ENCODE measurements at regions of chr2 and their contacts with region 1.

Region 1: GRCh38 chr2:130342533-130343275 is at the start of gene IMP4:
- DNase-seq: peak; percentile 99
- H3K4me3 Mint-ChIP-seq: peak within 1 kb of the TSS; percentile 100
- H3K27ac Mint-ChIP-seq: peak within 1 kb of the TSS; percentile 100
- H3K4me1 Mint-ChIP-seq: peaks cover 41% of the 10 kb centered on the region
- H3K27me3 Mint-ChIP-seq: no peaks in the 10 kb centered on the region
- total RNA-seq, gene IMP4: 71.1 to 75.2 TPM

Region 2: DNA sequence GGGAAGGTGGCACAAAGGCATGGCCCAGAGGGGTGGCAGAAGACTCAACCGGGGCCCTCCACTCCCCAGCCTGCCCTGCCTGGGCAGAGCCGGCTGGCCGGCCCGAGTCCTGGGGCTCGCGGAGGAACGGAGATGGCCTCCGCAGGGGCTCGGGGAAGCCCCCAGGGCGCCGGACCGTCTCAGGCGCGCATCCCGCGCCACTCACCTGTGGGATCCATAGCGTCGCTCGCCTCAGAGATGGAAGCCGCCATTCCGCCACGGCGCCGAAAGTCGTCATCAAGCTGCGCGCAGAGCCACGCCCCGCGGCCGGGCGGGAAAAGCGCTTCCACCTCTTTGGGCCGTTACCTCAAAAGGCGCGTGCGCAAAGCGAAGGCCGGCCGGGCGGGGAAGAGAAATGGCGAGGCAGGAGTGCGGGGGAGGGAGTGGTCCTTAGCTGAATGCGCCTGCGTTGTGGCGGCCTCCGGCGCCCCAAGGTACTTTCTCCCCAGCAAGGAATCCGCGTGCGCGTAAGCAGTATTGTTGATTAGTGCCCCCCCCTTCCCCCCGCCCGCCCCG is 161.3 kb before region 1 on chr2 and contains the start of gene SMPD4:
- CTCF ChIA-PET with region 1: interaction called, 10 read pairs
- POLR2A ChIA-PET with region 1: no interaction called
- DNase-seq: peak; percentile 96
- H3K4me3 Mint-ChIP-seq: peak within 1 kb of the TSS; percentile 91
- H3K27ac Mint-ChIP-seq: peak within 1 kb of the TSS; percentile 99
- H3K4me1 Mint-ChIP-seq: peaks cover 28% of the 10 kb centered on the region
- H3K27me3 Mint-ChIP-seq: no peaks in the 10 kb centered on the region
- total RNA-seq, gene SMPD4: 70.9 to 71.3 TPM

Region 3: GRCh38 chr2:130332271-130333073 is 10.2 kb before region 1 on chr2:
- CTCF ChIA-PET with region 1: interaction called, 16 read pairs
- POLR2A ChIA-PET with region 1: no interaction called
- DNase-seq: peak; percentile 70
- H3K4me3 Mint-ChIP-seq: peak overlapping the region; percentile 48
- H3K27ac Mint-ChIP-seq: no peak overlapping the region
- H3K4me1 Mint-ChIP-seq: peaks cover 14% of the 10 kb centered on the region
- H3K27me3 Mint-ChIP-seq: peaks cover 29% of the 10 kb centered on the region

Region 4: GRCh38 chr2:130355578-130356431 is 13.1 kb after region 1 on chr2 and contains the start of gene PTPN18:
- CTCF ChIA-PET with region 1: interaction called, 32 read pairs
- POLR2A ChIA-PET with region 1: interaction called, 11 read pairs
- DNase-seq: peak; percentile 60
- H3K4me3 Mint-ChIP-seq: peak within 1 kb of the TSS; percentile 73
- H3K27ac Mint-ChIP-seq: peak within 1 kb of the TSS; percentile 72
- H3K4me1 Mint-ChIP-seq: peaks cover 19% of the 10 kb centered on the region
- H3K27me3 Mint-ChIP-seq: peaks cover 8% of the 10 kb centered on the region
- total RNA-seq, gene PTPN18: 88.2 to 89.2 TPM

Region 5: GRCh38 chr2:130372055-130372832 is 29.5 kb after region 1 on chr2:
- CTCF ChIA-PET with region 1: interaction called, 20 read pairs
- POLR2A ChIA-PET with region 1: interaction called, 10 read pairs
- DNase-seq: peak; percentile 80
- H3K4me3 Mint-ChIP-seq: peak overlapping the region; percentile 86
- H3K27ac Mint-ChIP-seq: peak overlapping the region; percentile 95
- H3K4me1 Mint-ChIP-seq: peaks cover 67% of the 10 kb centered on the region
- H3K27me3 Mint-ChIP-seq: no peaks in the 10 kb centered on the region

Measured in activated CD4-positive, alpha-beta T cell treated with anti-CD3 and anti-CD28 coated beads, Interleukin-2, amount 10 ng/mL, durations not matched to agents 7 days and 5 days (primary cell).